B cell (primary cell): ENCODE measurements at regions of chr2 and their contacts with region 1.

Region 1: GRCh38 chr2:170928824-170929685 is at the start of gene GORASP2:
- DNase-seq: peak; percentile 99
- ATAC-seq: peak; percentile 91
- H3K4me3 ChIP-seq: peak within 1 kb of the TSS; percentile 73 to 95 (median 89)
- H3K4me3 Mint-ChIP-seq: peak within 1 kb of the TSS; percentile 92
- H3K27ac ChIP-seq: peak within 1 kb of the TSS; percentile 75 to 90
- H3K27ac Mint-ChIP-seq: peak within 1 kb of the TSS; percentile 96
- H3K4me1 ChIP-seq: peaks cover 20 to 22% of the 10 kb centered on the region in 2 donors
- H3K4me1 Mint-ChIP-seq: peaks cover 34% of the 10 kb centered on the region
- H3K27me3 ChIP-seq: no peaks in the 10 kb centered on the region
- H3K27me3 Mint-ChIP-seq: no peaks in the 10 kb centered on the region
- CTCF ChIP-seq: peak; percentile 99
- total RNA-seq, gene GORASP2: 48.8 and 50.5 TPM in 2 replicates

Region 2: GRCh38 chr2:169584005-169584877 is 1344.8 kb before region 1 on chr2 and contains the start of gene PPIG:
- CTCF ChIA-PET with region 1: no interaction called
- POLR2A ChIA-PET with region 1: no interaction called
- intact Hi-C with region 1: loop called (anchors 1 kb)
- DNase-seq: peak; percentile 94
- ATAC-seq: peak; percentile 89
- H3K4me3 ChIP-seq: peak within 1 kb of the TSS; percentile 70 to 99 (median 98)
- H3K4me3 Mint-ChIP-seq: peak within 1 kb of the TSS; percentile 99
- H3K27ac ChIP-seq: peak within 1 kb of the TSS; percentile 96 to 99
- H3K27ac Mint-ChIP-seq: peak within 1 kb of the TSS; percentile 99
- H3K4me1 ChIP-seq: peaks cover 12 to 24% of the 10 kb centered on the region in 2 donors
- H3K4me1 Mint-ChIP-seq: peaks cover 30% of the 10 kb centered on the region
- H3K27me3 ChIP-seq: no peaks in the 10 kb centered on the region
- H3K27me3 Mint-ChIP-seq: no peaks in the 10 kb centered on the region
- CTCF ChIP-seq: no peak
- total RNA-seq, gene PPIG: 78.6 and 82.4 TPM in 2 replicates

Region 3: DNA sequence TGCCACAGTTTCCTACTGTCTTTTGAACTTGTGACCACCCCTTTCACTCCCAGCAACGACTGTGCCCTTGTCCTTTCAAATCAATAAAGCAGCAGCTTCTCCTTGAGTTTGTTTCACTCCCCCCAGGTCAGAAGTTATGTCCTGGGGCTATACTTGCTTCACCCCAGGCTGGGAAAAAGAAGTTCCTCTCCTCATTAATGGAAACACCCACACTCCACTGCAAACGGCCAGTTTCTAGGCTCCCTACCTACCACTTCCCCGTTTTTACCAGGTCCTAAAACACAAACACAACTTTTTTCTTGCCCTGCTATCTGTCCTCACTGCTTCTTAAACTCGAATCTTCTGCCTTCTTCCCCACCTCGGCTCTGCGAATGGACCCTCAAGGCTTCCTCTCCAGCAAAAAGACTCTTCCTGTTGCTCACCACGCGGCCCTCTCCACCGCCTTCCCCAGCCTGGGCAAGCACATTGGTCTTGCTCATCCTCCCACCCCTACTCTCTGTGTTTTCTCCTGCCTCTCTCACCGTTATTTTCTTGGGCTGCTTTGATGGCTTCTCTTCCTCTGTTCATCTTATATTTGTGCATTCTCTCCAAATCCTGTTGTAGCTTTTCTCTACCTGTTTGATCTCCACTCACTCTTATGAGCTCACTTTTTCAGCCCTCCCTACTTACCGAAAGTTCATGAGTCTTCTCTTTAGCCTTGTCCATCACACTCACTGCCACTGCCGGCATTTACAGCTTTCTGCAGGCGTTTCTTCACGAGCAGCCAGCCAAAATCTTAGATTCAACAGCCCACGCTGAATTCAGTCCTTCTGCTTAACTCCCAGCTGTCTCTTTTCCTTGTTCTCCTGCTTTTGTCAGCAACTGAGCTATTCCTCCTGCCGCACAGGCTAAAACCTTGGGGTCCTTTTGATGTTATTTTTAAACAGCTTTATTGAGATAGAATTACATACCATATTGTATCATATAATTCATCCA is 220.9 kb before region 1 on chr2:
- CTCF ChIA-PET with region 1: no interaction called
- POLR2A ChIA-PET with region 1: no interaction called
- intact Hi-C with region 1: no loop called
- DNase-seq: no peak
- ATAC-seq: no peak
- H3K4me3 ChIP-seq: no peak overlapping the region
- H3K4me3 Mint-ChIP-seq: no peak overlapping the region
- H3K27ac ChIP-seq: no peak overlapping the region
- H3K27ac Mint-ChIP-seq: no peak overlapping the region
- H3K4me1 ChIP-seq: no peaks in the 10 kb centered on the region
- H3K4me1 Mint-ChIP-seq: no peaks in the 10 kb centered on the region
- H3K27me3 ChIP-seq: peaks cover 0 to 35% (median 18%) of the 10 kb centered on the region in 4 experiments
- H3K27me3 Mint-ChIP-seq: peaks cover 55% of the 10 kb centered on the region
- CTCF ChIP-seq: no peak

Region 4: GRCh38 chr2:170973492-170974303 is 44.6 kb after region 1 on chr2:
- CTCF ChIA-PET with region 1: interaction called, 11 read pairs
- POLR2A ChIA-PET with region 1: no interaction called
- intact Hi-C with region 1: loop called (anchors 1 kb)
- DNase-seq: peak; percentile 92
- ATAC-seq: peak; percentile 97
- H3K4me3 ChIP-seq: peak overlapping the region; percentile 43 to 86 (median 80)
- H3K4me3 Mint-ChIP-seq: peak overlapping the region; percentile 92
- H3K27ac ChIP-seq: peak overlapping the region; percentile 42 to 61
- H3K27ac Mint-ChIP-seq: peak overlapping the region; percentile 78
- H3K4me1 ChIP-seq: peaks cover 11 to 12% of the 10 kb centered on the region in 2 donors
- H3K4me1 Mint-ChIP-seq: peaks cover 12% of the 10 kb centered on the region
- H3K27me3 ChIP-seq: no peaks in the 10 kb centered on the region
- H3K27me3 Mint-ChIP-seq: no peaks in the 10 kb centered on the region
- CTCF ChIP-seq: peak; percentile 94

Region 5: DNA sequence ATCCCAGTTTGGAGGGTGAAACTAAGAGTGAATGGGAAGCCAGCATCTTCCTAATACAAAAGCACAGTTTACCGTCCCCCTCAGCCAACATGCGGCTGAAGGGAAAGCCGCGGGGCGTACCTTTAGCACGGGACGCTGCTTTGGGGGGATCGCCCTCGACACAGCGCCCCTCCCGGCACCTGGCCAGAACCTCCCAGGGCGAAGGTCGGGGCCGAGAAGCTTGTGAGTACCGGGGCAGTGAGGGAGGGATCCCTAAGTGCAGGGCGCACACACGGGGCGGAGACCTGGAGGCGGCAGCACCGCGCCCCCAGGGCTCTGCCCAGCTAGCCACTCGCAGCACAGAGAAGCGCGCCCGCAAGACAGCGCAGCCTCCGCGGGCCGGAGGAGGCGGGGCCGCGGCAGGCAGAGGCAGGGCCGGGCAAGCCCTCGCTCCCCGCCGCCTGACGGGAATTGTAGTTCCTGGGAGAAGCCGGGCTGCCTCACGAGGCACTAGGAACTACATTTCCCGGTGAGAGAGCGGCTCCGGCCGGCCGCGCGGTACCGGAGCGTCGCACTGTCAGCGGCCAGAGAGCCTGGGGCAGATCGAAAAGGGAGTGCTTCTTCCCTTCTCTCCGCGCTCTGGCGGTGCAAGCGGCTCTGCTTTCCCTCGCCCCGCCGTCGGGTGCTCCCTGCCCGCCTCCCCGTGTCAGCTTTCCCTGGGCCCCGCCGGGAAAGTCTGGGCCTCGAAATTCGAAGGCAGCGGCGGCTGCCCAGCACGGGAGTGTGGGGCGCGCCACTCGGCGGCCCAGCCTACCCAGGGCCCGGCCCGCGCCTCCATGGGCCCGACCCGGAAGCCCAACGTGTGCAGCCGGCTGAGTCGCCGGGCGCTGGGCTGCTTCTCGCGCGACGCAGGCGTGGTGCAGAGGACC is 505.0 kb after region 1 on chr2 and contains the starts of genes DCAF17 and METTL8:
- CTCF ChIA-PET with region 1: interaction called, 17 read pairs
- POLR2A ChIA-PET with region 1: interaction called, 5 read pairs
- intact Hi-C with region 1: loop called (anchors 1 kb)
- DNase-seq: peak; percentile 96
- ATAC-seq: peak; percentile 89
- H3K4me3 ChIP-seq: peak within 1 kb of the TSS; percentile 67 to 87 (median 80)
- H3K4me3 Mint-ChIP-seq: peak within 1 kb of the TSS; percentile 91
- H3K27ac ChIP-seq: peak within 1 kb of the TSS; percentile 84 to 85
- H3K27ac Mint-ChIP-seq: peak within 1 kb of the TSS; percentile 96
- H3K4me1 ChIP-seq: peaks cover 7 to 10% of the 10 kb centered on the region in 2 donors
- H3K4me1 Mint-ChIP-seq: peaks cover 24% of the 10 kb centered on the region
- H3K27me3 ChIP-seq: no peaks in the 10 kb centered on the region
- H3K27me3 Mint-ChIP-seq: no peaks in the 10 kb centered on the region
- CTCF ChIP-seq: peak; percentile 61
- total RNA-seq, gene DCAF17: 27.9 and 29.4 TPM in 2 replicates
- total RNA-seq, gene METTL8: 57.8 and 58.6 TPM in 2 replicates

Region 6: DNA sequence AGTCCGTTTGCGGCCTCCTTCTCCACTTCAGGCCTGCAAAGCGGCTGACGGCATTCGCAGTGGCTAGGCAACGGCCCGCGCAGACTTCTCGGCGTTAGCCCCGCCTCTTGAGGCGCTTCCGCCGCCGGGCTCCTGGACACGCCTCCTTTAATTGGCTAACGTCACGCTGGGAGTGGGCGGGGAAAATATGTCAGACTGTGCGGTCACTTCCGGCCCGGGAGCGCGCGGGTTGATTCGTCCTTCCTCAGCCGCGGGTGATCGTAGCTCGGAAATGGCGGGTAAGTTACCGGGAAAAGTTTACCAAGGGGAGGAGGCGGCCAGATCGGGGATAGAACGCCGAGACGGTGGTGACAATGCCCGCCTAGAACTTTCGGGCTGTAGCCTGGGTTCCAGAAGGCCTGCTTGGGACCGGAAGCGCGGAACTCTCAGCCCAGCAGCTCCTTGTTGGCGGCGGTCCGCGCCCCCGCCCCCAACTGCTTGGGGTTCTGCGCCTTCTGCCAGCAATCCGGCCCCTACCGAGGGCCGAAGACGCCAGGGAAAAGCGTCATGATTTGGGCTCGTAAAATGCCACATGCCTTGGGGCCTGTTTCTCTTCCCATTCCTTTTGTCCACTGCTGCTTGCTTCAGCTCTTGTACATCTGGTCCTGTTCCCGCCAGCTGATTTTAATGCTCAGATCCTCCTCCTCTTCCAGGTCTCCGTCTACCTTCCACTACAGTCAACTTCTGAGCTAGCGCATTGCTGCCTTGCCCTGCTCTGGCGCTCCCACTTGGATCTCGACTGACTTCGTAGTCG is 993.4 kb after region 1 on chr2 and contains the start of gene HAT1:
- CTCF ChIA-PET with region 1: no interaction called
- POLR2A ChIA-PET with region 1: no interaction called
- intact Hi-C with region 1: loop called (anchors 1 kb)
- DNase-seq: peak; percentile 98
- ATAC-seq: peak; percentile 98
- H3K4me3 ChIP-seq: peak within 1 kb of the TSS; percentile 81 to 98 (median 96)
- H3K4me3 Mint-ChIP-seq: peak within 1 kb of the TSS; percentile 97
- H3K27ac ChIP-seq: peak within 1 kb of the TSS; percentile 87 to 93
- H3K27ac Mint-ChIP-seq: peak within 1 kb of the TSS; percentile 99
- H3K4me1 ChIP-seq: peaks cover 16% of the 10 kb centered on the region in 2 donors
- H3K4me1 Mint-ChIP-seq: peaks cover 31% of the 10 kb centered on the region
- H3K27me3 ChIP-seq: no peaks in the 10 kb centered on the region
- H3K27me3 Mint-ChIP-seq: no peaks in the 10 kb centered on the region
- CTCF ChIP-seq: no peak
- total RNA-seq, gene HAT1: 25.1 and 26.9 TPM in 2 replicates